ENCODE measurements at regions of chr2 and their contacts with region 1.

Region 1: GRCh38 chr2:232854082-232854481 is 16.0 kb upstream of the SNORC start:
- DNase-seq: no peak
- H3K4me3 Mint-ChIP-seq: no peak overlapping the region
- H3K27ac Mint-ChIP-seq: no peak overlapping the region
- H3K4me1 Mint-ChIP-seq: no peaks in the 10 kb centered on the region
- H3K27me3 Mint-ChIP-seq: no peaks in the 10 kb centered on the region

Region 2: DNA sequence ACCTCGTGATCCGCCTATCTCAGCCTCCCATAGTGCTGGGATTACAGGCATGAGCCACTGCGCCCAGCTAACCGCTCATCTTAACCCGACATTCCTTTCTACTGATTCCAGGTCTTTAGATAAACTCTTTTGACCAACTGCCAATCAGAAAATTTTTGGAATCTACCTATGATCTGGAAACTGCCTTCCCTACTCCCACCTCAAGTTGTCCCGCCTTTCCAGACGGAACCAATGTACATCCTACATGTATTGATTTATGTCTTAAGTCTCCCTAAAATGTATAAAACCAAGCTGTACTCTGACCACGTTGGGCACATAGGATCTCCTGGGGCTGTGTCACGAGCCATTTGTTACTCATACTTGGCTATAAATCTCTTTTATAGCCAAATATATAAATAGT is 175.2 kb after region 1 on chr2:
- intact Hi-C with region 1: loop called (anchors 2 kb)
- DNase-seq: no peak
- H3K4me3 Mint-ChIP-seq: no peak overlapping the region
- H3K27ac Mint-ChIP-seq: no peak overlapping the region
- H3K4me1 Mint-ChIP-seq: no peaks in the 10 kb centered on the region
- H3K27me3 Mint-ChIP-seq: peaks cover 2% of the 10 kb centered on the region

Region 3: GRCh38 chr2:233053928-233054784 is 200.1 kb after region 1 on chr2:
- intact Hi-C with region 1: loop called (anchors 1 kb)
- DNase-seq: peak; percentile 52
- H3K4me3 Mint-ChIP-seq: no peak overlapping the region
- H3K27ac Mint-ChIP-seq: no peak overlapping the region
- H3K4me1 Mint-ChIP-seq: peaks cover 18% of the 10 kb centered on the region
- H3K27me3 Mint-ChIP-seq: peaks cover 25% of the 10 kb centered on the region